ENCODE measurements at regions of chr16 and their contacts with region 1.

Region 1: DNA sequence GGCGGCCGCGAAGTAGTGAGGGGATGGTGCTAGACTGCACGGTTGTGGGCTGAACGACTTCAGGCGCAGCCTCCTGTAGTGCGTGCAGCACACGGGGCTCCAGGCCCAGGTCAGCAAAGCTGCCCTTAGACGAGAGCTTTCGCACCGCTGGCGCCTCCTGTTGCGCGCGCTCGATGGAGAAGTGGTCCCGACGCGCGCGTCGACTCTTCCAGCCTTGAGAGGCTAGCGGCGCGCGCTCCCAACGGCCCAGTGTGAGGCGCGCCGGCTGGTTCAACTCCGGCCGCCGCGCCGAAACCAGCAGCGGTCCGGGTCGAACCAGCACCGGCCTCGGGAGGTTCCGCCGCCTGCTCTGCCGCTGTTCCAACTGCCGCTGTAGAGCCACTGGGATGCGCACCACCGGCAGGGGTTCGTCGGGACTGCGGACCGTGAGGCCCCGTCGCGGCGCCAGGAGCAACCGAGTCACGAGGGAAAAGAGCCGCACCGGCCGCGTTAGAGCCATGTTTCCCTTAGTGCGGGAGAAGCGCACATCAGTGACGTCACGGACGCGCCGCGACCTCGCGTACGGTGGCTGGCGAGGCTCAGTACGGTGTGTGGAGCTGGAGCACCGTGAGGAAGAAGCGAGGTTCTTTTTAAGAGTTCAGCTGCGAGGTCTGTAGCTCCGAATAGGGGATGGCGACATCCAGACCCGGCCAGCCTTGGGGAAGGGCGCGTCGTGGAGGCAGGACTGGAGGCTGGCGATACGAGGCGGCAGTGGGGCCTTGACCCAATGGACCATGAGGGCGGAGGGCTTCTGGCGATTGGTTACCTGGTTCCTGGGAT is at the starts of genes DDX28 and DUS2:
- DNase-seq: peak; percentile 86 to 95 (median 89)
- H3K4me3 ChIP-seq: peak within 1 kb of the TSS; percentile 97
- H3K4me3 Mint-ChIP-seq: peak within 1 kb of the TSS; percentile 94 to 100 (median 99)
- H3K27ac ChIP-seq: peak within 1 kb of the TSS; percentile 92
- H3K27ac Mint-ChIP-seq: peak within 1 kb of the TSS; percentile 85 to 100 (median 97)
- H3K4me1 ChIP-seq: peaks cover 28% of the 10 kb centered on the region
- H3K4me1 Mint-ChIP-seq: peaks cover 24 to 43% (median 34%) of the 10 kb centered on the region in 3 donors
- H3K27me3 ChIP-seq: no peaks in the 10 kb centered on the region
- H3K27me3 Mint-ChIP-seq: peaks cover 0 to 3% of the 10 kb centered on the region in 2 donors
- total RNA-seq, gene DDX28: 28.3 to 29.2 TPM
- total RNA-seq, gene DUS2: 31.3 to 32.2 TPM

Region 2: DNA sequence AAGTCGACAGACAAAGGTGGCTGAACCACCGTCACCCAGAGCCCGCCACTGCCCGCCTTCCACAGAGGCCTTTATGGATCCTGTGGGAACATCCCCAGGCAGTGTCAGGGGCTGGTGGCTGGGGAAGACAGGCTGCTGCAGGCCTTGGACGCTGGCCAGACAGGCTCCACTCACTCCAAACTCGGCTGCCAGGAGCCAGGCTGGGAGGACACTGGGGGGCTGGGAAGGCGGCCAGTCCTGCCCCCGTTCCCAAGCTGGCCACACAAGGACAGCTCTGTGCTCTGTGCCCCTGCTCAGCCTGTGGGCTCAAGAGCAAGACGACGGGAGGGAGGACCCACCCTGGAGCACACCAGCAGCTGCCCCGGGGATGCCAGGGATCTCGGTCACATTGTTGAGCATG is 71.4 kb before region 1 on chr16:
- CTCF ChIA-PET with region 1: no interaction called
- POLR2A ChIA-PET with region 1: no interaction called
- DNase-seq: no peak
- H3K4me3 ChIP-seq: no peak overlapping the region
- H3K4me3 Mint-ChIP-seq: no peak overlapping the region
- H3K27ac ChIP-seq: no peak overlapping the region
- H3K27ac Mint-ChIP-seq: no peak overlapping the region
- H3K4me1 ChIP-seq: no peaks in the 10 kb centered on the region
- H3K4me1 Mint-ChIP-seq: no peaks in the 10 kb centered on the region
- H3K27me3 ChIP-seq: no peaks in the 10 kb centered on the region
- H3K27me3 Mint-ChIP-seq: no peaks in the 10 kb centered on the region

Region 3: DNA sequence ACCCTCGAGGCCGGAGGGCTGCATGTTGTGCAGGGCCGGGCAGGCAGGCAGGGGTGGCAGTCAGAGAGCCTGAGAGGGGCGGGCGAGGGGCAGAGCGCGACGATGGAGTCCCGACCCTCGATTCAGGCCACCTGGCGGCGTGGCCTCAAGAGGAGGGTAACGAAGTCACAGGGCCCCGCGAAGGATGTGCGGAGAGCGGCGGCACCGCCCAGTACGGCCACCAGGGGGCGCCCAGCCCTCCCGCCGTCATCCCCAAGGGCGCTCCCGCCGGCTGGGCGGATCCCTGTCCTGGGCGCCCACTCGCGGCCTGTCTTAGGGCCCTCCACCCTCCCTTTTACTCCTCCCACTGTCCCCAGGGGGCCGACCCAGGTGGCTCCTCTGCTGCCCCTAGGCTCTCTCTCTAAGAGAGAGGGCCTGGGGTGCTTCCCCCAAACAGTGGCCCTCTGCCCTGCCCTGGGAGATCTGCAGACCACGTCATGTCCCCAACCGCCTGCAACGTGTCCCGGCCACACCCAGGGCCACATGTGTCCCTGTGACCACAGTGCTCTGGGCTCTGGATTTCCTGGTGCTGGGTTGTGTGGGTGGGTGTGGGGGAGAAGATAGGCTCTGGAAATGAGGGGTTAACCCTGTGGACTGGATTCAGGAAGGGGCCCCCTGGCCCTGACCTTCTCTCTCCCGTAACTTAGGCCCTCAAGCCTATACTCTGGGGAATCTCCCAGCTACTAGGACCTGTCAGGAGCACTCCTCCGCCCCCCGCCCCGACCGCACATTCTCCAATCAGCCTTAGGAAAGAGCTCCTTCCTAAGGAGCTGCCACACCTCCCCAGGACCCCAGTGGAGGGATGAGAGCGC is 29.5 kb before region 1 on chr16:
- CTCF ChIA-PET with region 1: interaction called, 15 read pairs
- POLR2A ChIA-PET with region 1: interaction called, 7 read pairs
- DNase-seq: peak; percentile 75 to 85 (median 81)
- H3K4me3 ChIP-seq: peak overlapping the region; percentile 41
- H3K4me3 Mint-ChIP-seq: peak overlapping the region; percentile 73 to 88 (median 82)
- H3K27ac ChIP-seq: peak overlapping the region; percentile 71
- H3K27ac Mint-ChIP-seq: peak overlapping the region; percentile 78 to 98 (median 95)
- H3K4me1 ChIP-seq: peaks cover 23% of the 10 kb centered on the region
- H3K4me1 Mint-ChIP-seq: peaks cover 22 to 48% (median 32%) of the 10 kb centered on the region in 3 donors
- H3K27me3 ChIP-seq: no peaks in the 10 kb centered on the region
- H3K27me3 Mint-ChIP-seq: no peaks in the 10 kb centered on the region

Region 4: GRCh38 chr16:67999985-68000384 is 22.9 kb before region 1 on chr16:
- CTCF ChIA-PET with region 1: interaction called, 15 read pairs
- POLR2A ChIA-PET with region 1: interaction called, 12 read pairs
- DNase-seq: peak in 1 of 5 donors; percentile 27
- H3K4me3 ChIP-seq: peak overlapping the region; percentile 70
- H3K4me3 Mint-ChIP-seq: peak overlapping the region; percentile 83 to 92 (median 85)
- H3K27ac ChIP-seq: no peak overlapping the region
- H3K27ac Mint-ChIP-seq: peak overlapping the region; percentile 77 to 96 (median 95)
- H3K4me1 ChIP-seq: peaks cover 46% of the 10 kb centered on the region
- H3K4me1 Mint-ChIP-seq: peaks cover 48 to 71% (median 55%) of the 10 kb centered on the region in 3 donors
- H3K27me3 ChIP-seq: no peaks in the 10 kb centered on the region
- H3K27me3 Mint-ChIP-seq: no peaks in the 10 kb centered on the region

Region 5: DNA sequence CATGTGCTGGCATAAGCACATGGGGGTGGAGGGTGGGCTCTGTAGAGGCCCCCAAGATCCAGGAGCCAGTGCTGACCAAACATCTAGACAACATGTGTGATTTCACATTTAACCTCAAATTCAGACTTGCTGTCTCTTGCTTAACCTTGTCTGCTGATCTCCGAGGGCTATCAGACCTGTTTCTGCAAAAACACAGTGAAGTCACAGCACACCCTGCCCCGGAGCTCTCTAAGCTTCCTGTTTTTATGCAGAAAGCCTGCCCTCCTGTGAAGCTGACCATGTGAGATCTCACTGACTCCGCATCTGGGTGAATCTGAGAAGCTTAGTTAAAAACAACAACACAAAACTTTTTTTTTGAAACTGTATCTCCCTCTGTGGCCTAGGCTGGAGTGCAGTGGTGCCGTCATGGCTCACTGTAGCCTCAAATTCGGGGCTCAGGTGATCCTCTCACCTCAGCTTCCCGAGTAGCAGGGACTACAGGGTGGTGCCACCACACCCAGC is 17.1 kb before region 1 on chr16:
- CTCF ChIA-PET with region 1: interaction called, 14 read pairs
- POLR2A ChIA-PET with region 1: interaction called, 12 read pairs
- DNase-seq: peak in 3 of 5 donors; percentile 57 to 72 (median 70)
- H3K4me3 ChIP-seq: no peak overlapping the region
- H3K4me3 Mint-ChIP-seq: peak overlapping the region in 6 of 7 donors; percentile 49 to 78 (median 73)
- H3K27ac ChIP-seq: peak overlapping the region; percentile 41
- H3K27ac Mint-ChIP-seq: peak overlapping the region; percentile 82 to 98 (median 93)
- H3K4me1 ChIP-seq: peaks cover 41% of the 10 kb centered on the region
- H3K4me1 Mint-ChIP-seq: peaks cover 35 to 42% (median 42%) of the 10 kb centered on the region in 3 donors
- H3K27me3 ChIP-seq: no peaks in the 10 kb centered on the region
- H3K27me3 Mint-ChIP-seq: no peaks in the 10 kb centered on the region

Region 6: GRCh38 chr16:68055395-68055794 is 32.5 kb after region 1 on chr16:
- CTCF ChIA-PET with region 1: no interaction called
- POLR2A ChIA-PET with region 1: no interaction called
- DNase-seq: no peak
- H3K4me3 ChIP-seq: no peak overlapping the region
- H3K4me3 Mint-ChIP-seq: no peak overlapping the region
- H3K27ac ChIP-seq: no peak overlapping the region
- H3K27ac Mint-ChIP-seq: peak overlapping the region in 1 of 8 donors; percentile 83
- H3K4me1 ChIP-seq: peaks cover 13% of the 10 kb centered on the region
- H3K4me1 Mint-ChIP-seq: peaks cover 22 to 33% (median 32%) of the 10 kb centered on the region in 3 donors
- H3K27me3 ChIP-seq: no peaks in the 10 kb centered on the region
- H3K27me3 Mint-ChIP-seq: no peaks in the 10 kb centered on the region

Measured in CD8-positive, alpha-beta memory T cell (primary cell).